ENCODE measurements at regions of chr5 and their contacts with region 1.

Region 1: GRCh38 chr5:57779383-57780223 is 297.0 kb upstream of the ACTBL2 start:
- DNase-seq: peak; percentile 59 to 73
- H3K4me3 ChIP-seq: no peak overlapping the region
- H3K27ac ChIP-seq: peak overlapping the region; percentile 55
- H3K4me1 ChIP-seq: peaks cover 29% of the 10 kb centered on the region
- H3K27me3 ChIP-seq: no peaks in the 10 kb centered on the region
- CTCF ChIP-seq: peak; percentile 77

Region 2: DNA sequence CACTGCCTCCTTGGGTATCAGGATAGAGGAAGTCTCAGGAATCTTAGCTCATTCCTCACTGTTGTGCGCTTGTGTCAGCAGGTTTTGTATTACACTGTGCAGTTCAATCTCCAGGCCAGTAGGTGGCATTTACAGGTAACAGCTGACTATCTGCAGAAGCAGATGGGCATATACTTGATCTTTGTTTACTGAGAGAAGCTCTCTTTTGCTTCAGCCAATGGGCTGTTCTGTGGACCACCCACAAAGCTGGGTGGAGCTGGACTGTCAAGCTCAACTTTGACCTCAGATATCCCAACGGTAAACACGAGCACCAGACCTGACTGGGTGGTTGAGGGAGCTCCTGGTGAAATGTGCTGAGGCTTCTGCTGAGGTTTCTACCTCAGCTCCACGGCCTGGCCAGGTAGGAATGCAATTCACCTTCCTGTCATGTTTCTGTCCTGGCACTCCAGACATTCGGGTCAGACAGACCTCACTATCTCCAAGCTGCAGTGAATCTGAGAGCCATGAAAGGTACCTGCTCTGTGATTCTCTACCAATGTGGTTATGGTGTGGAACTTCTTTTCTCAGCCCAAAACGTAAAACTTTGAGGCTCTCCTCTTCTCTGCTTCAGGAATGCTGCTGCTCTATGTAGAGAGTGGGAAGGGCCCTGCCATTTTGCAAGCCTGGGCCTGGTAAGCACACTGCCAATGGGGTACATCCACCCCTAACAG is 129.1 kb before region 1 on chr5:
- CTCF ChIA-PET with region 1: interaction called, 26 read pairs
- POLR2A ChIA-PET with region 1: interaction called, 7 read pairs
- intact Hi-C with region 1: loop called (anchors 1 kb)
- DNase-seq: peak in 1 of 2 experiments; percentile 70
- H3K4me3 ChIP-seq: no peak overlapping the region
- H3K27ac ChIP-seq: no peak overlapping the region
- H3K4me1 ChIP-seq: no peaks in the 10 kb centered on the region
- H3K27me3 ChIP-seq: no peaks in the 10 kb centered on the region
- CTCF ChIP-seq: peak; percentile 59

Region 3: DNA sequence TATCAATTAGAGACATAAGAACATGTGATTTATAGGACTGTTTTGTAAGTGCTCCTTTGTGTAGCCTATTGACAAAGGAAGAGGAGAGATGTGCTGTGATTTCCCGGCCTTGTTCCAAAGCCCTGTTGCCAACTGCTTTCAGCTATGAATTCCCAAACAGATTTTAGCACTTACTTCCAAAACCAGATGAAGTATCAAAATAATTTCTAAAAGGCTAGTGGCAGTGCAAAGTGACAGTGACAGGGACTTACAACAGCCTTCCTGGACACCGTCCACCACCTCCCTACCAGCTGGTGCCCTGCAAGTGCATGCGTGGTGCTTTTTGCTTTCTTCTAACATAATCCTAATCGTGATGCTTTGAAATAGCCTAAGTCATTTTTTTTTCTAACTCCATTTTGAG is 42.9 kb before region 1 on chr5:
- CTCF ChIA-PET with region 1: no interaction called
- POLR2A ChIA-PET with region 1: no interaction called
- intact Hi-C with region 1: loop called (anchors 1 kb)
- DNase-seq: no peak
- H3K4me3 ChIP-seq: no peak overlapping the region
- H3K27ac ChIP-seq: peak overlapping the region; percentile 92
- H3K4me1 ChIP-seq: peaks cover 49% of the 10 kb centered on the region
- H3K27me3 ChIP-seq: no peaks in the 10 kb centered on the region
- CTCF ChIP-seq: no peak

Region 4: DNA sequence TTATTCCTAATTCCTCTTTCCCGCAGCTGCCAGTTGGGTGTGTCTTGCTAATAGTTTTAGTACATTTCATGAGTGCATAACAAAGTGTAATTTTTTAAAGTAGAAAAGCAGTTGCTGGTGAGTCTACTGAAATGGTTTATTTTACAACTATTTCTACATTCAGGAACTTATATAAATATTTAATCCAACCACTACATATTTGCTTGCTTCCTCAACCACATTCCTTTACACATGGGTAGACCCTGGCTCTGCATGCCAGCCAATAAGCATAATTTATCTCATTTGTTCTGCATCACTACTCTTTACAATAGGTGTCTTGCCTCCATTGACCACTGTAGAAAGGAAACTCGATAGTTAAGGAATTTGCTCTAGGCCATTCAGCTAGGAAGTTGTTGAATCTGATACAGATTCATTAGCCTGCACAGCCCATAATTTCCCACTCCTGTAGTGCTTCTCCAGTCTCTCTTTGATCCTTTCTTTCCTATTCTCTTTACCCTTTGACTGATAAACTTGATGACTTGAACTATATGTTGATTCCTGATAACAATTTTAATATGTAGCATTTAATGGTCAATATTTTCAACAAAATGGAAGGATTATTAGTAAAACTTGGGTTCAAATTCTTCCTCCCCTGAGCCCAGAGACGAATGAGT is 45.6 kb after region 1 on chr5:
- CTCF ChIA-PET with region 1: interaction called, 4 read pairs
- POLR2A ChIA-PET with region 1: no interaction called
- intact Hi-C with region 1: loop called (anchors 1 kb)
- DNase-seq: peak; percentile 63 to 99
- H3K4me3 ChIP-seq: no peak overlapping the region
- H3K27ac ChIP-seq: peak overlapping the region; percentile 97
- H3K4me1 ChIP-seq: peaks cover 39% of the 10 kb centered on the region
- H3K27me3 ChIP-seq: no peaks in the 10 kb centered on the region
- CTCF ChIP-seq: no peak

Region 5: GRCh38 chr5:57862457-57862911 is 82.9 kb after region 1 on chr5:
- CTCF ChIA-PET with region 1: no interaction called
- POLR2A ChIA-PET with region 1: interaction called, 8 read pairs
- intact Hi-C with region 1: loop called (anchors 1 kb)
- DNase-seq: peak; percentile 69 to 97
- H3K4me3 ChIP-seq: no peak overlapping the region
- H3K27ac ChIP-seq: peak overlapping the region; percentile 99
- H3K4me1 ChIP-seq: peaks cover 31% of the 10 kb centered on the region
- H3K27me3 ChIP-seq: no peaks in the 10 kb centered on the region
- CTCF ChIP-seq: no peak

Region 6: DNA sequence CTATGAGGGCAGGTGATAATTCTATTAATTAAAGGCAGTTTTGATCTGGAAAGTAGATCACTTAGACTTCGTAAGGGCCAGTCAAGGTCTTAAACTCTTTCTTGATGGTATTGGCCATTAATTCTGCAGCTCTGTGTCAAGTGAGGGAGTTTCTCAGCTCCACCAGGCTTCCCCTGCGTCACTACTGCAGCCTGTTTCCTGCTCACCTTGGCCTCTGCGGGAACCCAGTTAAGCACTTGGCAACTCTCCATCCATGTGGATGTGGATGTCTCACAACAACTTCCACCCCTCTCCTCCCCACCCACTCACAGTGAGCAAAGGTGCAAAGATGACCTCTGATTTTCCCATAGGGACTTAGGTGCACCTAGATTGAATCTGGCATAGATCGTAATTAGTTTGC is 488.7 kb after region 1 on chr5:
- CTCF ChIA-PET with region 1: no interaction called
- POLR2A ChIA-PET with region 1: no interaction called
- intact Hi-C with region 1: no loop called
- DNase-seq: no peak
- H3K4me3 ChIP-seq: no peak overlapping the region
- H3K27ac ChIP-seq: no peak overlapping the region
- H3K4me1 ChIP-seq: 0 out of 2 replicates have a peak, but pooled peaks cover 9% of the 10 kb centered on the region
- H3K27me3 ChIP-seq: no peaks in the 10 kb centered on the region
- CTCF ChIP-seq: no peak

Region 7: GRCh38 chr5:58460732-58461286 is 681.2 kb after region 1 on chr5:
- CTCF ChIA-PET with region 1: interaction called, 9 read pairs
- POLR2A ChIA-PET with region 1: interaction called, 7 read pairs
- intact Hi-C with region 1: loop called (anchors 1 kb)
- DNase-seq: peak; percentile 79 to 91
- H3K4me3 ChIP-seq: peak overlapping the region; percentile 90
- H3K27ac ChIP-seq: peak overlapping the region; percentile 96
- H3K4me1 ChIP-seq: peaks cover 14% of the 10 kb centered on the region
- H3K27me3 ChIP-seq: no peaks in the 10 kb centered on the region
- CTCF ChIP-seq: peak; percentile 83

Measured in PC-9 (cell line).